ENCODE measurements at regions of chr18 and their contacts with region 1.

Region 1: GRCh38 chr18:9366192-9366591 is 31.6 kb downstream of the TWSG1 start:
- DNase-seq: peak in 1 of 2 donors; percentile 26
- ATAC-seq: peak in 7 of 8 donors; percentile 29 to 61 (median 57)
- H3K4me3 ChIP-seq: no peak overlapping the region
- H3K27ac ChIP-seq: no peak overlapping the region
- H3K4me1 ChIP-seq: peaks cover 0 to 4% (median 0%) of the 10 kb centered on the region in 9 donors
- H3K27me3 ChIP-seq: no peaks in the 10 kb centered on the region
- CTCF ChIP-seq: peak in 6 of 9 donors; percentile 18 to 52 (median 29)

Region 2: DNA sequence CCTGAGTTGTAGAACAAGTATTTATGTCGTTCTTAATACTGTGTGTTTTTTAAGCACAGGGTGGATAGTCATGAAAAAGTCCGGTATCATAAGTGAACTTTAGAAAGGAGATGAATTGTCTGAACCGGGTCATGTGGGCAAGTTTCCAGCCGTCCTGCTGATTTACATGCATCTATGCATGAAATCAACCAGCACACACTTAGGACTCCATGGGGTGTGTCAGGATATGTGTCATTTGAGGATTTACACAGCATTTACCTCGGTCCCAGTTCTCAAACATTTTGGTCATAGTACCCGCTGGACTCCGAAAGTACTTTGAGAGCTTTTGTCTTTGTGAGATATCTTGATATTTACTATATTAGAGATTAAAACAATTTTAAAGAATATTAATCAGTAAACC is 79.2 kb before region 1 on chr18:
- intact Hi-C with region 1: no loop called
- DNase-seq: no peak
- ATAC-seq: no peak
- H3K4me3 ChIP-seq: no peak overlapping the region
- H3K27ac ChIP-seq: no peak overlapping the region
- H3K4me1 ChIP-seq: no peaks in the 10 kb centered on the region
- H3K27me3 ChIP-seq: no peaks in the 10 kb centered on the region
- CTCF ChIP-seq: no peak

Region 3: DNA sequence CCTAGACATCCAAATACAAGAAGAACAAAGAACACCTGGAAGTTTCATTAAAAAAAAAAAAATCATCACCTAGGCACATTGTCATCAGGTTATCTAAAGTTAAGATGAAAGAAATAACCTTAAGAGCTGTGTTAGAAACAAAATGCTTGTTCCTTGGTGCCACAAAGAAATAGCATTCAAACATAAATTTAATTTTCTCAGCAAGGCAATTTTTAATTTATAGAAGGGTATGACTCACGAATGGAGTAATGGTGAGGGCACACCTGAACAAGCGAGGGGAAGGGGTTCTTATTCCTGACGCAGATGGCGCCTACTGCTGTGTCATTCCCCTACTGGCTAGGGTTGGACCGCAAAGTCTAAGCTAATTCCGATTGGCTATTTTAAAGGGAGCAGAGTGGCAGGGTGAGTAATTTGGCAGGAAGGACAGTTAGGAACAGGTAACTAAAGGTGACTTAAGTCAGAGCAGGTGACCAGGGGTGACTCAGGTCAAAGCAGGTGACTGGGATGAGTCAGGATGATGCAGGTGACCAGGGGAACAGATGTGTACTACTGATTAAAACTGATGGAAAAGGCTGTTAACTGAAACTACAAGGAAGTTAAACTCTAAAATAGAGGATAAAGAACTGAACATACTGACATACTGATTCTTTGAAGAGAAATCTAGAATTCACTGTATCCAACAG is 61.7 kb before region 1 on chr18:
- intact Hi-C with region 1: loop called in 1 of 10 experiments (anchors 10 kb)
- DNase-seq: no peak
- ATAC-seq: no peak
- H3K4me3 ChIP-seq: no peak overlapping the region
- H3K27ac ChIP-seq: no peak overlapping the region
- H3K4me1 ChIP-seq: no peaks in the 10 kb centered on the region
- H3K27me3 ChIP-seq: no peaks in the 10 kb centered on the region
- CTCF ChIP-seq: no peak

Region 4: DNA sequence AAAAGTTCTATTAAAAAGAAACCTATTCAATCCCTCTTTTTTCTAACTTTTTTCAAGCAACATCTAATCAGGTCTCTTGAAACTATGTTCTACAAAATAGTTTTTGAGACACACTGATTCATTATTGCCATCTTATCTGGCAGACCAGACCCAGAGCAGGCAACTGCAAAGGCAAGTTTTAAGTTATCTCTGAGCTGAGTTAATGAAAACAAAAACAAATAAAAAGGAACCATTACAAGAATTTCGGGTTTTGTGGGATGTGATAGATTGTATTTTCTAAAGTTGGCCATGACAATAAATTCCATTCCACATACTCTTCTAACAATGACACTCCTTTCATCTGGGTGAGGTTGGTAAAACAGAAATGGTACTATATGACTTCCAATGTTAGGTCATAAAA is 46.9 kb before region 1 on chr18:
- intact Hi-C with region 1: loop called in 1 of 10 experiments (anchors 10 kb)
- DNase-seq: no peak
- ATAC-seq: no peak
- H3K4me3 ChIP-seq: no peak overlapping the region
- H3K27ac ChIP-seq: no peak overlapping the region
- H3K4me1 ChIP-seq: no peaks in the 10 kb centered on the region
- H3K27me3 ChIP-seq: no peaks in the 10 kb centered on the region
- CTCF ChIP-seq: no peak

Region 5: GRCh38 chr18:9334973-9335696 is 31.1 kb before region 1 on chr18:
- intact Hi-C with region 1: no loop called
- DNase-seq: no peak
- ATAC-seq: peak in 7 of 8 donors; percentile 35 to 75 (median 58)
- H3K4me3 ChIP-seq: peak overlapping the region; percentile 58 to 95 (median 78)
- H3K27ac ChIP-seq: peak overlapping the region in 9 of 10 donors; percentile 29 to 88 (median 80)
- H3K4me1 ChIP-seq: peaks cover 0 to 27% (median 16%) of the 10 kb centered on the region in 9 donors
- H3K27me3 ChIP-seq: peaks cover 0 to 4% (median 0%) of the 10 kb centered on the region in 7 donors
- CTCF ChIP-seq: peak in 3 of 9 donors; percentile 21 to 34 (median 23)

Region 6: GRCh38 chr18:9719421-9719981 is 353.3 kb after region 1 on chr18:
- intact Hi-C with region 1: no loop called
- DNase-seq: no peak
- ATAC-seq: peak in 2 of 8 donors; percentile 20 to 28
- H3K4me3 ChIP-seq: no peak overlapping the region
- H3K27ac ChIP-seq: peak overlapping the region in 1 of 10 donors; percentile 29
- H3K4me1 ChIP-seq: peaks cover 0 to 43% (median 0%) of the 10 kb centered on the region in 9 donors
- H3K27me3 ChIP-seq: no peaks in the 10 kb centered on the region
- CTCF ChIP-seq: no peak

Measured in heart right ventricle (tissue), 16 donors.